PC-3 (cell line): ENCODE measurements at regions of chr18 and their contacts with region 1.

Region 1: DNA sequence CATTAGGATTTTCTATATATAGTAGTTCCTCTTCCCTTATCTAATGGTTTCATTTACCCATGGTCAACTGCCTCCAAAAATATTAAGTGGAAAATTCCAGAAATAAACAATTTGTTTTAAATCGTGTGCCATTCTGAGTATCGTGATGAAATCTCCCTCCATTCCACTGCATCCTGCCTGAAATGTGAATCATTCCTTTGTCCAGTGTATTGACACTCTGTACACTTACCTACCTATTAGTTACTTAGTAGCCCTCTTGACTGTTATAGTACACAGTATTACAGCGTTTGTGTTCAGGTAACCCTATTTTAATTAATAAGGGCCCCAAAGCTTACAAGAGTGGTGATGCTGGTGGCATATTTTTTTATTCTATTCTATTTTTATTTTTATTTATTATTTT is 26.2 kb downstream of the TAF4B start:
- DNase-seq: no peak
- ATAC-seq: no peak
- H3K4me3 ChIP-seq: no peak overlapping the region
- H3K27ac ChIP-seq: no peak overlapping the region
- H3K4me1 ChIP-seq: no peaks in the 10 kb centered on the region
- H3K27me3 ChIP-seq: no peaks in the 10 kb centered on the region
- CTCF ChIP-seq: no peak

Region 2: GRCh38 chr18:25713104-25713503 is 539.3 kb before region 1 on chr18:
- CTCF ChIA-PET with region 1: no interaction called
- POLR2A ChIA-PET with region 1: no interaction called
- intact Hi-C with region 1: no loop called
- DNase-seq: no peak
- ATAC-seq: no peak
- H3K4me3 ChIP-seq: no peak overlapping the region
- H3K27ac ChIP-seq: no peak overlapping the region
- H3K4me1 ChIP-seq: no peaks in the 10 kb centered on the region
- H3K27me3 ChIP-seq: peaks cover 25% of the 10 kb centered on the region
- CTCF ChIP-seq: no peak

Region 3: GRCh38 chr18:25935356-25935755 is 317.1 kb before region 1 on chr18:
- CTCF ChIA-PET with region 1: no interaction called
- POLR2A ChIA-PET with region 1: no interaction called
- intact Hi-C with region 1: no loop called
- DNase-seq: no peak
- ATAC-seq: no peak
- H3K4me3 ChIP-seq: no peak overlapping the region
- H3K27ac ChIP-seq: no peak overlapping the region
- H3K4me1 ChIP-seq: no peaks in the 10 kb centered on the region
- H3K27me3 ChIP-seq: peaks cover 79% of the 10 kb centered on the region
- CTCF ChIP-seq: no peak

Region 4: DNA sequence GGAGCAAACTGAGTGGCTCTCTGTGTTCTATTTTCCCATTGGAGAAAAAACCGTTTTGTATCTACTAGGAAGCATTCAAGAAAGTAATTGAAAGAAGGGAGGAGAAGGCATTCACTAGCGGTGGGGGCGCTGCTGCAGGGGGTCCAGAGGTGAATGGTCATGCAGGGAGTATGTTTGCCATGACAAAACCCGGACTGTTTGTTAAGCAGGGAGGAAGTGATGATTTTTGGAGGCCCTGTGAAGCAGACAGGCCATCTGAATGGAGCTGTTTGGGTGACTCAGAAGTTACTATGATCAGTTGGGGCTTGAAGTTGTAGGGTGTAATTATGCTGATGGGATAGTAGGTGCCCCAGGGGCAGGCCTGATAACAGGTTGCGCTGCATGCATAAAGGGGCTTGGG is 19.2 kb before region 1 on chr18:
- CTCF ChIA-PET with region 1: no interaction called
- POLR2A ChIA-PET with region 1: interaction called, 10 read pairs
- intact Hi-C with region 1: no loop called
- DNase-seq: no peak
- ATAC-seq: no peak
- H3K4me3 ChIP-seq: no peak overlapping the region
- H3K27ac ChIP-seq: no peak overlapping the region
- H3K4me1 ChIP-seq: peaks cover 7% of the 10 kb centered on the region; the same call in 1 of the 2 replicates
- H3K27me3 ChIP-seq: no peaks in the 10 kb centered on the region
- CTCF ChIP-seq: no peak